Heart left ventricle (tissue), 16 donors: ENCODE measurements at regions of chr4 and their contacts with region 1.

Region 1: DNA sequence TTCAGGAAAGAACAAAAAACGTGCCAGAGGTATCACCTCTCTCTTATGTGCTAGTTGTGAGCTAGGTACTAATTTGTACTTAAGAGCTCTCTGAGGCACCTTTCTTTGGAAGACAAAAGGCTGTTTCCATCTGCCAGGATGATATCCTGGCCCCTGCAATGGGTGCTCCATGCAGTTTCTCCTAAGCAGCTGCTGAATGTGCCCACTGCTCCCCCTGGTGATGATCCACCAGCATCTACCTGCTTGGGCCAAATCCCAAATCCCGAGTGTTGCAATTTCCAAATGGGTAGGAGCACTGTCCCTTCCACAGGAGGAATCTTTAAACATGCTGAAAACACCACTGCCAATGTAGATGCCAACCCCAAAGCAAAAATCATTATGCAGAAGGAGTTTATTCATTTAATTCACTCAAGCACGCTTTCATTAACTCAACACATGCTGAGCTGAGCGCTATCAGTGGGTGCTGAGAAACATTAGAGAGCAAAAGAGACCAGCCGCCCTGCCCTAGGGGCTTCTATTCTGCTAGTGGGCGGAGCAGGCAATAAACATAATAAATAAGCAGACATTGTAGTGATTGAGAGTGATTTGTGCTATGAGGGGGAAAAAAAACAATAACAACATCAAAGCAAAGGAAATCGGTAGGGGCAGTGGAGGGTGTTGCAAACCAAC is 69.6 kb upstream of the C4orf50 start:
- DNase-seq: peak in 1 of 5 donors; percentile 44
- ATAC-seq: peak in 1 of 4 donors; percentile 46
- H3K4me3 ChIP-seq: no peak overlapping the region
- H3K27ac ChIP-seq: no peak overlapping the region
- H3K4me1 ChIP-seq: no peaks in the 10 kb centered on the region
- H3K27me3 ChIP-seq: peaks cover 0 to 23% (median 0%) of the 10 kb centered on the region in 9 donors
- CTCF ChIP-seq: peak in 11 of 12 donors; percentile 20 to 48 (median 34)
- POLR2A ChIP-seq: no peak

Region 2: GRCh38 chr4:5998333-5998936 is 89.4 kb before region 1 on chr4:
- intact Hi-C with region 1: loop called (anchors 1 to 5 kb)
- DNase-seq: peak in 4 of 5 donors; percentile 33 to 50 (median 44)
- ATAC-seq: peak in 3 of 4 donors; percentile 69 to 79 (median 75)
- H3K4me3 ChIP-seq: no peak overlapping the region
- H3K27ac ChIP-seq: no peak overlapping the region
- H3K4me1 ChIP-seq: no peaks in the 10 kb centered on the region
- H3K27me3 ChIP-seq: peaks cover 0 to 41% (median 0%) of the 10 kb centered on the region in 9 donors
- CTCF ChIP-seq: peak; percentile 69 to 91 (median 88)
- POLR2A ChIP-seq: no peak